Colonic mucosa (tissue), 4 donors: ENCODE measurements at regions of chr16 and their contacts with region 1.

Region 1: GRCh38 chr16:67993189-67994039 is 5.9 kb downstream of the DPEP2 start:
- DNase-seq: peak; percentile 78
- H3K4me3 ChIP-seq: peak overlapping the region; percentile 23
- H3K27ac ChIP-seq: peak overlapping the region; percentile 30
- H3K4me1 ChIP-seq: peaks cover 6% of the 10 kb centered on the region
- H3K27me3 ChIP-seq: no peaks in the 10 kb centered on the region
- CTCF ChIP-seq: peak; percentile 97

Region 2: DNA sequence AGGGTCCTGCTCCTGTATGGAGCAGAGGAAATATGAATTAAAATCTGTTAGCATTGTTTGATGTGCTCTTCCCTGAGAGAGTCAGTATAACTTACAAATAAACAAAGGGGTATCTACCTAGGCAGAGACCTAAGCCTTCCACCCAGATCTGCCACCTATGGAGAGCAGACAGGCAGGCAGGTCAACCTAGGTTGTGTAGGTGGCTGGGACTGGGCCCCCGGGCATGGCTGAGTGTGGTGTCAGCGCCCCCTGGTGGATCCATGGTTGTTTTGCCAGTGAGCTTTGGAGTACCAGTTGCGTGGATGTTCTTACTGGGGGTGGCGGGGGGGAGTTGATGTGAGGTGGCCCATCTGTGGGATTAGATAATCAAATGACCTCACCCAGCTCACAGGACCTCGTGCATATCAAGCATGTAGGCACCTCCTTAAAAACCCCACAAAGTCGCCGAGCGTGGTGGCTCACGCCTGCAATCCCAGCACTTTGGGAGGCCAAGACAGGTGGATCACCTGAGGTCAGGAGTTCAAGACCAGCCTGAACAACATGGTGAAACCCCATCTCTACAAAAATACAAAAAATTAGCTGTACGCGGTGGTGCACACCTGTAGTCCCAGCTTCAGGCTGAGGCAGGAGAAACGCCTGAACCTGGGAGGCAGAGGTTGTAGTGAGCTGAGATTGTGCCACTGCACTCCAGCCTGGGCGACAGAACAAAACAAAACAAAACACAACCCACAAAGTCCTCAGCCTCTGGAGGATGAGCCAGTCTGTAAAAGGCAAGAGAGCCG is 47.3 kb after region 1 on chr16:
- intact Hi-C with region 1: loop called (anchors 5 kb)
- DNase-seq: peak; percentile 88
- H3K4me3 ChIP-seq: no peak overlapping the region
- H3K27ac ChIP-seq: no peak overlapping the region
- H3K4me1 ChIP-seq: no peaks in the 10 kb centered on the region
- H3K27me3 ChIP-seq: no peaks in the 10 kb centered on the region
- CTCF ChIP-seq: peak; percentile 71

Region 3: DNA sequence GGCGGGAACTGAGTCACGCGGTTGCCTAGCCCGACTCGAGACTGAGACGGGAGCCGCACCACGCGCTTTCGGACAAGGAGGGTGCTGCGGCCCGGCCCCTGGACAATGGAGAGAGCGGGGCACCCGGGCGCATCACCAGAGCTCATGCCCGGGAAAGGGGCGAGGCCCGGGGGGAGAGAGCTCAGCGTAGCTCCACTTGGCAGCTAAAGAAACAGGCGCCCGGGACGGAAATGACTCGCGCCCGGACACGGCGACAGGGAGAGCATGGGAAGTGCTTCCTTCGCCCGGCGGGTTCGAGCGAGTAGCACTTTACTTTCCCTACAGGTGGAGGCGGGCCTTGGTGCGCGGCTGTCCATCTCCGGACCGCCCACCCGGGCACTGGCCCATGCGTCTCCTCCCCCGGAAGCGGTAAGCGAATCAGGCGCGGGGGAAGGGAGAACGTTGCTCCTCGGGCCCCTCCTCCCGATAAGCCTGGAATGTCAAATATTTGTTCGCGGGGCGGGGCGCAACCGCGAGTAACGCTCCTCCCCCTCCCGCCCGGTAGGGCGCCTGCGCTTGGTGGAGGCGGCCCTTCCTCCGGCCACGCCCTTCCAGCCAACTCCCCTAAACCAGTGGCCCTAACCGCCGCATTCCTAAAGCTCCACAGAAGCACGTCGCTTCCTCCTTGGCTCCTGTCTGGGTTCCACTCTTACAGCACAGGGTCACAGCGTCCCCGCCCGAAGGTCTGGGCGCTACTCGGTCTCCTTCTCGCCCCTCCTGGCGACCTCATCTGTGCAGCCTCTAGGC is 244.0 kb after region 1 on chr16:
- intact Hi-C with region 1: loop called (anchors 10 kb)
- DNase-seq: peak; percentile 99
- H3K4me3 ChIP-seq: peak overlapping the region; percentile 75
- H3K27ac ChIP-seq: peak overlapping the region; percentile 88
- H3K4me1 ChIP-seq: peaks cover 7% of the 10 kb centered on the region
- H3K27me3 ChIP-seq: no peaks in the 10 kb centered on the region
- CTCF ChIP-seq: no peak